Activated CD4-positive, alpha-beta memory T cell treated with anti-CD3 and anti-CD28 coated beads, Interleukin-2, amount 10 ng/mL, durations not matched to agents 7 days and 5 days (primary cell): ENCODE measurements at regions of chr3 and their contacts with region 1.

Region 1: GRCh38 chr3:197782230-197782629 is 8.8 kb upstream of the LRCH3 start:
- DNase-seq: no peak
- H3K4me3 Mint-ChIP-seq: no peak overlapping the region
- H3K27ac Mint-ChIP-seq: no peak overlapping the region
- H3K4me1 Mint-ChIP-seq: peaks cover 2% of the 10 kb centered on the region
- H3K27me3 Mint-ChIP-seq: no peaks in the 10 kb centered on the region

Region 2: GRCh38 chr3:197801891-197802778 is 19.9 kb after region 1 on chr3:
- CTCF ChIA-PET with region 1: interaction called, 10 read pairs
- POLR2A ChIA-PET with region 1: no interaction called
- DNase-seq: peak; percentile 45
- H3K4me3 Mint-ChIP-seq: no peak overlapping the region
- H3K27ac Mint-ChIP-seq: peak overlapping the region; percentile 63
- H3K4me1 Mint-ChIP-seq: peaks cover 44% of the 10 kb centered on the region
- H3K27me3 Mint-ChIP-seq: no peaks in the 10 kb centered on the region